AG04449 (cell line): ENCODE measurements at regions of chr2 and their contacts with region 1.

Region 1: DNA sequence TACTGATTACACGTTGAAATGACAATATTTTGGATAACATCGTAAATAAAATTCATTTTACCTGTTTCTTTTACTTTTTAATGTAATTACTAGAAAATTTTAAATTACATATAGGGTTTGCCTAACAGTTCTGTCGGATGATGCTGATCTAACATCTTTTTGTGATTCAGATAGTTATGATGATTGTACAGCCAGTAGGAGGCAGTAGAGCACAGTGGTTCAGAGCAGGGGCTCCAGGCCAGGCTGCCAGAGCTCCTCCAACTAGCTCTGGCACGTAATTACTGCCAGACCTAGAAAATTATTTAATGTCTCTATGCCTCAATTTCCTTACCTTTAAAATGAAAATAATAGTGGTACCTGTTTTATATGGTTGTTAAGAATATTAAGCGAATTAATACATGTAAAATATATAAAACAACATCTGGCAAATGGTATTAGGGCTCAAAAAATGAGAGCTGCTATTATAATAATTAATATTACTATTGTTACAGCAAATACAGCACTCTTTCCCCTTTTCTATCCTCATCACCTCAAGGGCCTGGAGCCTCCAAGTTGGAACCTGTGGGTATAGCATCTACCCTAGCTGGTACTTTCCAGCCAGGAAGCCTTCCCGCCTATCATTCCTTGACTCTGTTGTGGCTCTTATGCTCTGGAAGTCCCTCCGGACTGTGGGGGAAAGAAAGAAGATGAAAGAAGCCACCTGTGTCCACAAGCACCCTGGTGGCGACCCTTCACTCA is 47.7 kb upstream of the PLA2R1 start:
- DNase-seq: peak; percentile 31
- H3K4me3 ChIP-seq: no peak overlapping the region
- CTCF ChIP-seq: peak; percentile 67

Region 2: DNA sequence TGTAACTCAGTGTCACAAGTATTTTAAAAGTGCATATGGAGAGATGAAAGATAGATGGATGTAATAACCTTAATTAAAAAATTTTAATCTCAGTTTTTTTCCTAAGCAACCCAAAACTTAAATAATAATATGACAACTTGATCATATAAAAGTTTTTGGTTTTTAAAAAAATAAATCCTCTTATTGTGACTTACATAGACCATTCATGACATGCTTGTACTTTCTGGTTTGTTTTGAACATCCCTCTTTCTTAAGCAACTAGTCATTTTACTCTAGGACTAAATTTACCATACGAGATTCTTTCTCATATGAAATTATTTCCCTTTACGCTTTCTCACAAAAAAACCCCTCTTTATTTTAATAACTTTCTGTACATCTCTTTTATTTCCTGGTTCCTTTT is 41.2 kb before region 1 on chr2:
- CTCF ChIA-PET with region 1: no interaction called
- POLR2A ChIA-PET with region 1: no interaction called
- DNase-seq: no peak
- H3K4me3 ChIP-seq: no peak overlapping the region
- CTCF ChIP-seq: no peak

Region 3: GRCh38 chr2:160125828-160126227 is 15.7 kb after region 1 on chr2:
- CTCF ChIA-PET with region 1: interaction called, 16 read pairs
- POLR2A ChIA-PET with region 1: no interaction called
- DNase-seq: no peak
- H3K4me3 ChIP-seq: no peak overlapping the region
- CTCF ChIP-seq: no peak

Region 4: DNA sequence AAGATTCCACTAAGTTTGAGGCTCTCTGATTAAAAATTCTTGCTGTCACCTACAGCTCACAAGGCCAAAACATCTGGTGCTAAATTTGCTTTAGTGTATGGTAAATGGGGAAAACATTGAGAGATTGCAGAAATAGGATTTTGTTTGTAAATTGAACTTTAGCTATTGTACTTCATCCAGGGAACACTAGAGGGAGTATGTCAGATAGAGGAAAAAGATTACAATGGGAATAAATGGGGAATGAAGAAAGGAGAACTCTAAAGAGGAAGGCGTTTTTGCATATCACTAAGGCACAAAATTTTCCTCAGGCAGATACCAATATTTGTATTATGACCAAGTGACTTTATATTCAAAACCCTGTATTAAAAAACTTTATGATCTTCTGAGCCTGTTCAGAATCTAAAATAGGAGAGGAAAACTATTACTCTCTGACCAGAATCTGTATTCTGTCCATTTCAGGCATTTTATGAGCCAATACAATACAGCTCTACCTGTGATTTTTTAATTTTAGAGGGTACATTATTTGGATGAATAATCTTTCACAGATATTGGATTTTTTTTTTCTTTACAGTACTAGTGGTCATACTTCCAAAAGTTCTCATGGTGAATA is 142.3 kb after region 1 on chr2:
- CTCF ChIA-PET with region 1: interaction called, 28 read pairs
- POLR2A ChIA-PET with region 1: no interaction called
- DNase-seq: no peak
- H3K4me3 ChIP-seq: no peak overlapping the region
- CTCF ChIP-seq: peak; percentile 58

Region 5: DNA sequence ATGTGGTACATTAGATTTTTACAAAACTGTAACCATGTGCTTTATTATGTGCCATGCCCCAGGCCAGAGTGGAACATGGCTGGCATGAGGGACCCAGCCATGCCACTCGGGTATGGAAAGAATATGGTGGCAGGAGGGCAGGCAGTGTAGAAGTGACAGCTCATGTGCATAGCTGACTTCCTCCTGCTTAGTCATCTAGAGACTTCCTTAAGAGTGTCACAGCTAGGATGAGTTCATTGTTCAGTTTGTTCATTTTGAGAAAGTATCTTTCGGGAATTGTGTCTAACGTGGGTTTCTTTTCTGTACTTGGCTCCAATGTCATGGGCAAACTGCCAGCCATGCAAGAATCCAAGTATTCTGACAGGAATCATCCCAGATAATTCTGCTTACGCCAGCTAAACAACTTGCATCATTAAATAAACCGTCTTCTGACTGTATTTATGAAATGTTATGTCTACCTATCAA is 184.3 kb after region 1 on chr2:
- CTCF ChIA-PET with region 1: interaction called, 11 read pairs
- POLR2A ChIA-PET with region 1: no interaction called
- DNase-seq: no peak
- H3K4me3 ChIP-seq: no peak overlapping the region
- CTCF ChIP-seq: no peak

Region 6: DNA sequence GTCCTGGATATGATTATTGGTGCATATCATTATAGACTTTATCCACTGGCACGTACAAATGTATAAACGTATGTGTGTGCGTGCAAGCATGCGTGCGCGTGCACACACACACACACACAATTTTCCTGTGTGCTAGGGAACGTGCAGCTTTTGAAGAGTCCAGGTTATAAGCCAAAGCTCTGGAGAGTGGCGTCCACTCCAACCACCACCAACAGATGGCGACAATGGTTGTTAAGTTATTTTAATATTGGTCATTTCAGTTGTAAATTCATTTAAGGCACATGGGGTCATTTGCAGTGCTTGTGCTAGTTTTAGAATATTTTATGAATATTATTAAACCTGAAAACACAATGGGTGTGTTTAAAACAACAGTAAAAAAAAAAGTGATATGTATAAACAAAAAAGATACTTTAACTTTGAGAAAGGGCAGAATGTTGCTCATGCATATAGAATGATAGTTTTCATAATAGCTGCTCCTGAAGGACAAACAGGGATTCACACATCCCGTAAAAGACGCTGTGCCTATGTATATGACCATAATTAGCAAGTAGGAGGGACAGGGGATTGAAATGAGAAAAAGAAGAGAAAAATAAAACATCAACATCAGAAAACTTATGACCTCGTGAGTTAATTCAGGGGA is 214.2 kb after region 1 on chr2:
- CTCF ChIA-PET with region 1: interaction called, 21 read pairs
- POLR2A ChIA-PET with region 1: no interaction called
- DNase-seq: no peak
- H3K4me3 ChIP-seq: no peak overlapping the region
- CTCF ChIP-seq: peak; percentile 62

Region 7: GRCh38 chr2:160994141-160995002 is 884.3 kb after region 1 on chr2:
- CTCF ChIA-PET with region 1: interaction called, 68 read pairs
- POLR2A ChIA-PET with region 1: no interaction called
- DNase-seq: no peak
- H3K4me3 ChIP-seq: no peak overlapping the region
- CTCF ChIP-seq: peak; percentile 58

Region 8: GRCh38 chr2:161063157-161063954 is 953.3 kb after region 1 on chr2:
- CTCF ChIA-PET with region 1: interaction called, 32 read pairs
- POLR2A ChIA-PET with region 1: no interaction called
- DNase-seq: peak; percentile 40
- H3K4me3 ChIP-seq: peak overlapping the region; percentile 23; the same call in 1 of the 2 replicates
- CTCF ChIP-seq: peak; percentile 75